Activated T-helper 1 cell treated with anti-CD3 and anti-CD28 coated beads, Interleukin-12 subunit alpha, Interleukin-12 subunit beta, Interleukin-2, Interleukin-4 antibody, amounts not matched to agents 30 ng/mL and 10 ng/mL and 1 ng/mL, durations not matched to agents 14 hours and 24 hours and 36 hours (primary cell): ENCODE measurements at regions of chr10 and their contacts with region 1.

Region 1: GRCh38 chr10:74826142-74827044 is at the start of gene KAT6B:
- DNase-seq: peak; percentile 100
- H3K4me3 Mint-ChIP-seq: peak within 1 kb of the TSS; percentile 88
- H3K27ac Mint-ChIP-seq: peak within 1 kb of the TSS; percentile 95
- H3K4me1 Mint-ChIP-seq: peaks cover 49% of the 10 kb centered on the region
- H3K27me3 Mint-ChIP-seq: no peaks in the 10 kb centered on the region
- total RNA-seq, gene KAT6B: 24.6 and 26.9 TPM in 2 replicates

Region 2: GRCh38 chr10:74262856-74263255 is 563.5 kb before region 1 on chr10:
- intact Hi-C with region 1: loop called (anchors 1 kb)
- DNase-seq: no peak
- H3K4me3 Mint-ChIP-seq: no peak overlapping the region
- H3K27ac Mint-ChIP-seq: no peak overlapping the region
- H3K4me1 Mint-ChIP-seq: peaks cover 13% of the 10 kb centered on the region
- H3K27me3 Mint-ChIP-seq: no peaks in the 10 kb centered on the region

Region 3: GRCh38 chr10:74347522-74347921 is 478.9 kb before region 1 on chr10:
- intact Hi-C with region 1: no loop called
- DNase-seq: no peak
- H3K4me3 Mint-ChIP-seq: no peak overlapping the region
- H3K27ac Mint-ChIP-seq: no peak overlapping the region
- H3K4me1 Mint-ChIP-seq: no peaks in the 10 kb centered on the region
- H3K27me3 Mint-ChIP-seq: no peaks in the 10 kb centered on the region

Region 4: DNA sequence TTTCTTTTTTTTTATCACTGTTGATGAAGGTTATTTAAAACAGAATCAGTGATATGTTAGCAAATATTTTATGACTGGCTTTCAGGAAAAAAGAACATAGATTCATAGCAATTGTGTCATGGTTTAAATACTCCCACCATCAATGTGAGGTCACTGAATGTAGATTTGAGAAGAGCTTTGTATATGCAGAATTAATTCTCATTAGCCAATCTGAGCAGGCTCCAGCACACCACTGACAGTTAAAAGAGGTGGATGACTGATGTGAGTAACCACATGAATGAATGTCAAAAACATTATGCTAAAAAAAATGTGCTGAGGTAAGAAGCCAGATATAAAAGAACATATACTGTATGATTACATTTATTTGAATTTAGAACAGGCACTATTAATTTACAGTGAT is 174.8 kb before region 1 on chr10:
- intact Hi-C with region 1: no loop called
- DNase-seq: no peak
- H3K4me3 Mint-ChIP-seq: no peak overlapping the region
- H3K27ac Mint-ChIP-seq: no peak overlapping the region
- H3K4me1 Mint-ChIP-seq: no peaks in the 10 kb centered on the region
- H3K27me3 Mint-ChIP-seq: no peaks in the 10 kb centered on the region

Region 5: GRCh38 chr10:74753442-74754211 is 72.8 kb before region 1 on chr10:
- intact Hi-C with region 1: loop called (anchors 2 kb)
- DNase-seq: no peak
- H3K4me3 Mint-ChIP-seq: no peak overlapping the region
- H3K27ac Mint-ChIP-seq: no peak overlapping the region
- H3K4me1 Mint-ChIP-seq: peaks cover 15% of the 10 kb centered on the region
- H3K27me3 Mint-ChIP-seq: peaks cover 3% of the 10 kb centered on the region

Region 6: DNA sequence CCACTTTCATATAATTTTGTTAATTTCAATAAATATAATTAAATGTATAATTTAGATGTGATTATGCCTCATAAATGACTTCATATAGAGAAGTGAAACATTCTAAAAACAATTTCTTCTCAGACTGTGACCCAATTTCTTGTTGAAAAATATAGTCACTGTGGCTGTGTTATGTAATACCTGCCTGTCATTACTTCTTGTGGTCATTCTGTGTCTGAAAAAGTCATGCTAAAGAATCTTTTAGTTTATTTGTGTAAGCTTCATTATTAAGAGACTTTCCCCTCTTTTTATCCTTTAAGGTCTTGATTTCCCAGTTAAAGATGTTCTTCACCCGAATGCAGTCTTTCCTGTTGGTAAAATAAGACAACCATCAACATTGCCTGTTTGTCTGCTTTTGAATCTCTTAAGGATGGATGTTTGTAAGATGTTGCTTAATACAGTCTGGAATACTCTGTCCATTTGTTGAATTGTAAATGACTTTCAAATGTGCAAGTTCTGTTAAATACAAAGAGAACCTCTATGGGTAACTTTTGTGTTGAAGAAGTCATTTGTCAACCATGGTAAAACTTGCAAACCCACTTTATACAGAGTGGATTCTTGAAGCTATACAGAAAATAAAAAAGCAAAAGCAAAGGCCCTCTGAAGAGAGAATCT is 16.0 kb after region 1 on chr10:
- intact Hi-C with region 1: no loop called
- DNase-seq: no peak
- H3K4me3 Mint-ChIP-seq: no peak overlapping the region
- H3K27ac Mint-ChIP-seq: no peak overlapping the region
- H3K4me1 Mint-ChIP-seq: peaks cover 22% of the 10 kb centered on the region
- H3K27me3 Mint-ChIP-seq: no peaks in the 10 kb centered on the region

Region 7: DNA sequence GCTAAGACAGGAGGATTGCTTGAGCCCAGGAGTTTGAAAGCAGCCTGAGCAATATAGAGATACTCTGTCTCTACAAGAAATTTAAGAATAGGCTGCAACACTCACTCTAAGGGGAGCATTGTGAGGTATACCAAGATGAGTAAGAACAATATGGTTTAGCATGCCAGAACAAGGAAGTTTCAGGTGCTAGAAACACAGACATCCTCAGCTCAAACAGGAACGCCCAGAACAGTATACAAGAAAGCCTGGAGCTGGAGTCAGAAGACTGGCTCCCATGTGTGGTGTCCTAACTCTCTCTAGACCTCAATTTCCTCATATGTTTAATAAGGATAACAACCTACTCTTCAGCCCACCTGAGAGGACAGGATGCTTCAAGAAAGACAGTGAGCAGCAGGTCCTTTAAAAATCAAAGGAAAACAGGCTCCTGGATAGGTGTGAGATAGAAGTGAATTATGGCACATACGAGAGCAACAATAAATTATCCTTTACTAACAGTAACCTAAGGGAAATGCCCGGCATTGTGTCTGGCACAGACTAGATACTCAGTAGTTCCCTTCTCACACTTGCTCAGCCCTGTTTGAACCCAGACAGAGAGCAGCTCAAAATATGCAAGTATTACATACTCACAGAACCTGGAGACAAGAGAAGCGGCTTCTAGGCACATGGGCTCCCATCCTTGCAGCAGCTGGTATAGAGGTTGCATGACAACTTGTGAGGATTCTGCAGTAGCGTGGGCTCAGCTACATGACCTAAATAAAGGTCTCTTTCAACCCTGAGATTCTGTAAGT is 45.4 kb after region 1 on chr10:
- intact Hi-C with region 1: loop called (anchors 1 kb)
- DNase-seq: no peak
- H3K4me3 Mint-ChIP-seq: peak overlapping the region; percentile 76
- H3K27ac Mint-ChIP-seq: peak overlapping the region; percentile 81
- H3K4me1 Mint-ChIP-seq: peaks cover 27% of the 10 kb centered on the region
- H3K27me3 Mint-ChIP-seq: no peaks in the 10 kb centered on the region

Region 8: DNA sequence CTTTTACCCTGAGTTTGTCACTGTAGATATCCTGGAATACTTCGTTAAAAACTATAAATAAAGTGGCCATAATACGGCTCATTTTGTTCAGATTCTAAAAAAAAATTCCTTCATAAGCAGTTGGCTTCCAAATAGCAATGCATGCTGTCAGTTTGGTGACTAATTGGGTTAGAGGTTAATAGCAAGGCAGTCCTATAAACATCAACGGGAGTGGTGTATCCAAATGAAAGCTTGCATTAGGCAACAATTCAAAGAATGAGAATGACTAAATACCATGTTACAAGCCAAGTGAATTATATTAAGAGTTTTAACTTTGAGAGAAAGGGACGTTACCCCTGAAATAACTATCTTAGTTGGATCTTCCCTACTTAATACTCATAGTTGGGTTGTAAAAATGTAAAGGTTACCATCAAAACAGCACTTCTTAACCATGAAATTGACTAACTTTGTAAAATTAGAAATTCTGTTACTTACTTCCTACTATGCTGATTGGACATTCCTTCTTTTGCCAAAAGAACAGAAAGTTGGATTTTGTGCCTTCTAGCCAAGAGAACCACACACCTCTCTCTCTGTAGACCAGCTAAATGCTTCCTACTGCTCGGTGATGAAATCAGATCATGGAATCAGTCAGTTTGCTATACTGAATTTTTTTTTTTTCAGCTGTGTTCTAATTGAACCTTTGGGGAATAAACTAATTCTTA is 98.0 kb after region 1 on chr10:
- intact Hi-C with region 1: no loop called
- DNase-seq: no peak
- H3K4me3 Mint-ChIP-seq: no peak overlapping the region
- H3K27ac Mint-ChIP-seq: no peak overlapping the region
- H3K4me1 Mint-ChIP-seq: peaks cover 18% of the 10 kb centered on the region
- H3K27me3 Mint-ChIP-seq: no peaks in the 10 kb centered on the region

Region 9: GRCh38 chr10:75019370-75019769 is 193.0 kb after region 1 on chr10:
- intact Hi-C with region 1: loop called (anchors 1 kb)
- DNase-seq: no peak
- H3K4me3 Mint-ChIP-seq: no peak overlapping the region
- H3K27ac Mint-ChIP-seq: no peak overlapping the region
- H3K4me1 Mint-ChIP-seq: peaks cover 43% of the 10 kb centered on the region
- H3K27me3 Mint-ChIP-seq: no peaks in the 10 kb centered on the region

Region 10: GRCh38 chr10:75210282-75211006 is 384.1 kb after region 1 on chr10 and contains the start of gene VDAC2:
- intact Hi-C with region 1: loop called (anchors 1 kb)
- DNase-seq: peak; percentile 95
- H3K4me3 Mint-ChIP-seq: peak within 1 kb of the TSS; percentile 92
- H3K27ac Mint-ChIP-seq: peak within 1 kb of the TSS; percentile 100
- H3K4me1 Mint-ChIP-seq: peaks cover 30% of the 10 kb centered on the region
- H3K27me3 Mint-ChIP-seq: no peaks in the 10 kb centered on the region
- total RNA-seq, gene VDAC2: 220 and 224 TPM in 2 replicates